ENCODE measurements at regions of chr11 and their contacts with region 1.

Region 1: DNA sequence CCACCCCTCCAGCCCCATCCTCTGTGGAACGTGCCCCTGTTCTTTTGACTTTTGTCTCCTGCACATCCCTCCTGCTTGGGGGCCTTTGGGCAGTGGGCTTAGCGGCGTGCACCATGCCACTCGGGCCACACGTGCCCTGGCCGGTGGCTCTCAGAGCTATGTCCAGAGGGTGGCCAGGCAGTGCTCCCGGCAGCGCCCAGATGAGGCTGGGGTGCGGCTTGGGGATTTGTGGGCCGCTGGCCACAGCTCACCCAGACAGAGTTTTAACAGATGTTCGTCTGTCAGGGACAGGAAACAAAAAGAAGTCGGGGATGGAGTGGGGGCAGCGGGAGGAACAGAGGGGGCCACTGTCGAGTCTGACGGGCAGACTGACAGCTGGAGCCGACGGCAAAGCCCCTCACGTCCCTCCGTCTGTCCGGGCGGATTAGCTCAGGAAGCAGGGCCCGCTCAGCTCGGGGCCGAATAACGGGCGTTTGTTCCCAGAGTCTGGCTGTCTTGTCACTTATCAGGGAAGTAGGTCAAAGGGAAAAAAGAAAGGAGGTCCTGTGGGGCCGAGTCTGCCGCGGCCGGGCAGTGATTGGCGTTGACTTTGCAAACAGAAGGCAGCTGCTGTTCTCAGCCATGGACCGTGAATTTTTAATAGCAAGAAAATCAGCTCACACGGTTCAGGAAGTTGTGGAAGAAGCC is 61.6 kb downstream of the LRP5 start:
- DNase-seq: no peak
- CTCF ChIP-seq: no peak

Region 2: DNA sequence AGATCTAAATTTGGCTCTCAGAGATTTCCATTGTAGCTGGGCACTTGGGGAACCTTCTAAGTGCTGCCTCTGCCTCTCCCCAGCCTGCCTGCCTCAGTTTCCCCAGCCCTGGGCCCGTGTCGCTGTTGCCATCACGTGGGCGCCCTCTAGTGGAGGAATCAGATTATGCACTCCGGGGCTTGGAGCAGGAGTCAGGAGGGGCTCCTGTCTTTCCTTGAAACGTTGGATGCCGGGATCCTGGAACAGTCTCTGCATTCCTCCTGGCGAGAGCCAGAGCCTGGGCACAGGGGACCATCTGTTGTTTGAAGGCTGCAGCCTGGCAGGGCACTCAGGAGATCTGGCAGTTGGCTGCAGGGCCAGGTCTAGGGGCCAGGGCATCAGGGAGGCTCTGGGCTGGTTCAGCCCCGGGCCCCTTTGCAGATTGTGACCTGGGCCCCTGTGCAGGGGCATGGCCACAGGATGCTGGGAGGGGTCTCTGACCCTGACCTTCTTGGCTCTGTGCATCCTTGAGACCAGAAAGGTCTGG is 10.1 kb after region 1 on chr11:
- CTCF ChIA-PET with region 1: interaction called, 13 read pairs
- POLR2A ChIA-PET with region 1: no interaction called
- DNase-seq: peak; percentile 80
- CTCF ChIP-seq: peak; percentile 85

Measured in GM10248 (cell line).